ENCODE measurements at regions of chr3 and their contacts with region 1.

Region 1: DNA sequence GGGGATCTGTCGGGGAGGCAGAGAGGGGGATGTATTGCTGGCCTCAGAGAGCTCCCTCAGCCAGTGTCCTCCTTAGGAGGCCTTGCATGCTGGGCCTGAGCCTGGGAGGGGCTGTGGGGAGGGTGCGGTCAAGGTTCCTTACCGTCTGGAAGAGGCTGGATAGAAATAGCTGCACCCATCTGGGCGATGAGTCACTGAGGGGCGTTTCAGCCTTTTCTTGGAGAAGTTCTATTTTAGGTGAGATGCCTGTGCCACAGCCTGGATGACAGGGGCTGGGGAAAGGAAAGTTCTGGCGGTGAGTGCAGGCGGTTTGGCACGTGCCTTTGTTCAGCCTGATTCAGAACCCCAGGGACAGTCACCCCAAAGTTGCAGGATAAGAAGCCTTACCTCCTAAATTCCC is 35.7 kb upstream of the APEH start:
- DNase-seq: no peak
- H3K4me3 ChIP-seq: no peak overlapping the region
- H3K27ac ChIP-seq: no peak overlapping the region
- H3K4me1 ChIP-seq: peaks cover 0 to 3% (median 0%) of the 10 kb centered on the region in 4 experiments; a peak in 1 of 7 replicates
- H3K27me3 ChIP-seq: no peaks in the 10 kb centered on the region
- CTCF ChIP-seq: no peak
- EP300 ChIP-seq: no peak
- POLR2A ChIP-seq: no peak
- RAD21 ChIP-seq: no peak

Region 2: DNA sequence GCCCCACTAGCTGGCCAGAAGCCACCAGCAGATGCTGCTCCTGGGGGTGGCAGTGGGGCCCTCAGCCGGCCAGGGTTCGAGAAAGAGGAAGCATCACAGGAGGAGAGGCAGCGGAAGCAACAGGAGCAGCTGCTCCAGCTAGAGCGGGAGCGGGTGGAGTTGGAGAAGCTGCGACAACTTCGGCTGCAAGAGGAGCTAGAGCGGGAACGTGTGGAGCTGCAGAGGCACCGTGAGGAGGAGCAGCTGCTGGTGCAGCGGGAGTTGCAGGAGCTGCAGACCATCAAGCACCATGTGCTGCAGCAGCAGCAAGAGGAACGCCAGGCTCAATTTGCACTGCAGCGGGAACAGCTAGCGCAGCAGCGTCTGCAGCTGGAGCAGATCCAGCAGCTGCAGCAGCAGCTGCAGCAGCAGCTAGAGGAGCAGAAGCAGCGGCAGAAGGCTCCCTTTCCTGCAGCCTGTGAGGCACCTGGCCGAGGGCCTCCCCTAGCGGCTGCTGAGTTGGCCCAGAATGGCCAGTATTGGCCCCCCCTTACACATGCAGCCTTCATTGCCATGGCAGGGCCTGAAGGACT is 18.2 kb after region 1 on chr3:
- CTCF ChIA-PET with region 1: interaction called, 39 read pairs
- POLR2A ChIA-PET with region 1: interaction called, 3 read pairs
- DNase-seq: no peak
- H3K4me3 ChIP-seq: no peak overlapping the region
- H3K27ac ChIP-seq: no peak overlapping the region
- H3K4me1 ChIP-seq: no peaks in the 10 kb centered on the region
- H3K27me3 ChIP-seq: no peaks in the 10 kb centered on the region
- CTCF ChIP-seq: peak in 2 of 3 experiments; percentile 10 to 16; a peak in 1 of 4 replicates
- EP300 ChIP-seq: no peak
- POLR2A ChIP-seq: no peak
- RAD21 ChIP-seq: peak in 1 of 2 experiments; percentile 38; a peak in 1 of 4 replicates

Measured in H1 (cell line).